ENCODE measurements at regions of chr5 and their contacts with region 1.

Region 1: GRCh38 chr5:141557681-141558136 is 61.1 kb downstream of the DIAPH1 start:
- DNase-seq: peak; percentile 99
- H3K4me3 ChIP-seq: peak overlapping the region; percentile 4 to 9 (median 4)
- H3K27ac ChIP-seq: peak overlapping the region; percentile 97
- H3K4me1 ChIP-seq: peaks cover 31% of the 10 kb centered on the region
- H3K27me3 ChIP-seq: no peaks in the 10 kb centered on the region
- CTCF ChIP-seq: peak; percentile 80 to 82

Region 2: DNA sequence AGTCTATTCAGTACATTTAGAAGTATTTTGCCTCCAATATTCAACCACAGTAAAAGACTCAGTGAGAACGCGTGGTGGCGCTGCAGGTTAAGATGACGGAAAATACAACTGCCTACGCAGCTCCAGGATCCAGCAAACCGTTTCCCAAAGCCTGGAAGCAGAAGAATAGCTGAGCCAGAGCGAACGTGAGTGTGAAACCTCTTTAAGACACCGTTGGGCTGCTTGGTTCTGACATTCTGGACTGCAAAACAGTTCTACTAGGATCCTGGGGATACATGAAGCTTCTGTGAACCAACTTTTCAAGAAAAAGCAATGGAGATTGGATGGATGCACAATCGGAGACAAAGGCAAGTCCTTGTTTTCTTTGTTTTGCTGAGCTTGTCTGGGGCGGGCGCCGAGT is 375.5 kb before region 1 on chr5 and contains the start of gene PCDHB16:
- CTCF ChIA-PET with region 1: no interaction called
- dilution Hi-C with region 1: no loop called
- in situ Hi-C with region 1: no loop called
- intact Hi-C with region 1: loop called (anchors 2 kb)
- DNase-seq: peak; percentile 3
- H3K4me3 ChIP-seq: peak within 1 kb of the TSS in 1 of 3 experiments; percentile 19
- H3K27ac ChIP-seq: no peak within 1 kb of the TSS
- H3K4me1 ChIP-seq: no peaks in the 10 kb centered on the region
- H3K27me3 ChIP-seq: no peaks in the 10 kb centered on the region
- CTCF ChIP-seq: peak; percentile 27 to 48
- total RNA-seq, gene PCDHB16: 0.21 to 0.33 TPM

Region 3: GRCh38 chr5:141223112-141223783 is 334.5 kb before region 1 on chr5 and contains the start of gene PCDHB14:
- CTCF ChIA-PET with region 1: interaction called, 5 read pairs
- dilution Hi-C with region 1: no loop called
- in situ Hi-C with region 1: loop called (anchors 10 to 25 kb)
- intact Hi-C with region 1: loop called (anchors 1 kb)
- DNase-seq: peak; percentile 65
- H3K4me3 ChIP-seq: peak within 1 kb of the TSS in 2 of 3 experiments; percentile 17 to 32
- H3K27ac ChIP-seq: no peak within 1 kb of the TSS
- H3K4me1 ChIP-seq: no peaks in the 10 kb centered on the region
- H3K27me3 ChIP-seq: no peaks in the 10 kb centered on the region
- CTCF ChIP-seq: peak in 1 of 2 donors; percentile 38
- total RNA-seq, gene PCDHB14: 1.4 to 1.7 TPM

Region 4: GRCh38 chr5:141369994-141370848 is 187.5 kb before region 1 on chr5 and contains the start of gene PCDHGB3:
- CTCF ChIA-PET with region 1: interaction called, 13 read pairs
- dilution Hi-C with region 1: no loop called
- in situ Hi-C with region 1: no loop called
- intact Hi-C with region 1: loop called (anchors 5 kb)
- DNase-seq: peak; percentile 12
- H3K4me3 ChIP-seq: peak within 1 kb of the TSS in 2 of 3 experiments; percentile 4 to 26
- H3K27ac ChIP-seq: no peak within 1 kb of the TSS
- H3K4me1 ChIP-seq: no peaks in the 10 kb centered on the region
- H3K27me3 ChIP-seq: peaks cover 1% of the 10 kb centered on the region
- CTCF ChIP-seq: peak; percentile 28 to 40
- total RNA-seq, gene PCDHGB3: 1.8 to 4.2 TPM

Region 5: DNA sequence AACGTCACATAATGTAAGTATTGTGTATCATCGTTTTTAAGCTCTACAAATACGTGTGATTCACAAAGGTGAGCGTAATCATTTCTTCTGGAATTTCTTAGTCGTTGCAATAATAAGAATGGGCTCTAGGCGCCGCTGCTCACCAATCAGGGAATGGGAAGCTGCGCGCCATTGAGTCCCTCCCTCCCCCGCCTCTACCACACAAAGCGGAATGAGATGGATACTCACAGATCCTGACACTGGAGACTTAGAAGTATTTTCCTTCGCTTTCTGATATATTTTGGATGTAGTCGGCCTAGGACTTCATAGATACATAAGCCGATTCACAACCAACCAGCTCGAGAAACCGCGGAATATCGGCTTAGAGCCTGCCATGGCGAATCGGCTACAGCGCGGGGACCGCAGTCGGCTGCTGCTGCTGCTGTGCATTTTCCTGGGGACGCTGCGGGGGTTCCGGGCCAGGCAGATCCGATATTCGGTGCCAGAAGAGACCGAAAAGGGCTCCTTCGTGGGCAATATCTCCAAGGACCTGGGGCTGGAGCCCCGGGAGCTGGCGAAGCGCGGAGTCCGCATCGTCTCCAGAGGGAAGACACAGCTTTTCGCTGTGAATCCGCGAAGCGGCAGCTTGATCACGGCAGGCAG is 136.7 kb before region 1 on chr5 and contains the start of gene PCDHGA11:
- CTCF ChIA-PET with region 1: no interaction called
- dilution Hi-C with region 1: loop called (anchors 10 kb)
- in situ Hi-C with region 1: no loop called
- intact Hi-C with region 1: loop called (anchors 1 kb)
- DNase-seq: peak; percentile 67
- H3K4me3 ChIP-seq: peak within 1 kb of the TSS in 1 of 3 experiments; percentile 7
- H3K27ac ChIP-seq: no peak within 1 kb of the TSS
- H3K4me1 ChIP-seq: no peaks in the 10 kb centered on the region
- H3K27me3 ChIP-seq: no peaks in the 10 kb centered on the region
- CTCF ChIP-seq: peak in 1 of 2 donors; percentile 24
- total RNA-seq, gene PCDHGA11: 1.2 to 8.5 TPM

Region 6: GRCh38 chr5:141475625-141476131 is 82.0 kb before region 1 on chr5 and contains the start of gene PCDHGC3:
- CTCF ChIA-PET with region 1: interaction called, 3 read pairs
- dilution Hi-C with region 1: no loop called
- in situ Hi-C with region 1: no loop called
- intact Hi-C with region 1: loop called (anchors 1 kb)
- DNase-seq: peak; percentile 95
- H3K4me3 ChIP-seq: peak within 1 kb of the TSS; percentile 50 to 73 (median 72)
- H3K27ac ChIP-seq: peak within 1 kb of the TSS; percentile 79
- H3K4me1 ChIP-seq: peaks cover 25% of the 10 kb centered on the region
- H3K27me3 ChIP-seq: no peaks in the 10 kb centered on the region
- CTCF ChIP-seq: peak; percentile 14 to 46
- total RNA-seq, gene PCDHGC3: 74.7 to 76.3 TPM

Region 7: GRCh38 chr5:141681695-141682641 is 124.3 kb after region 1 on chr5 and contains the start of gene ARAP3:
- CTCF ChIA-PET with region 1: interaction called, 37 read pairs
- dilution Hi-C with region 1: no loop called
- in situ Hi-C with region 1: no loop called
- intact Hi-C with region 1: no loop called
- DNase-seq: peak; percentile 86
- H3K4me3 ChIP-seq: peak within 1 kb of the TSS; percentile 23 to 54 (median 45)
- H3K27ac ChIP-seq: peak within 1 kb of the TSS; percentile 72
- H3K4me1 ChIP-seq: peaks cover 26% of the 10 kb centered on the region
- H3K27me3 ChIP-seq: no peaks in the 10 kb centered on the region
- CTCF ChIP-seq: no peak
- total RNA-seq, gene ARAP3: 6.0 to 10.0 TPM

Region 8: DNA sequence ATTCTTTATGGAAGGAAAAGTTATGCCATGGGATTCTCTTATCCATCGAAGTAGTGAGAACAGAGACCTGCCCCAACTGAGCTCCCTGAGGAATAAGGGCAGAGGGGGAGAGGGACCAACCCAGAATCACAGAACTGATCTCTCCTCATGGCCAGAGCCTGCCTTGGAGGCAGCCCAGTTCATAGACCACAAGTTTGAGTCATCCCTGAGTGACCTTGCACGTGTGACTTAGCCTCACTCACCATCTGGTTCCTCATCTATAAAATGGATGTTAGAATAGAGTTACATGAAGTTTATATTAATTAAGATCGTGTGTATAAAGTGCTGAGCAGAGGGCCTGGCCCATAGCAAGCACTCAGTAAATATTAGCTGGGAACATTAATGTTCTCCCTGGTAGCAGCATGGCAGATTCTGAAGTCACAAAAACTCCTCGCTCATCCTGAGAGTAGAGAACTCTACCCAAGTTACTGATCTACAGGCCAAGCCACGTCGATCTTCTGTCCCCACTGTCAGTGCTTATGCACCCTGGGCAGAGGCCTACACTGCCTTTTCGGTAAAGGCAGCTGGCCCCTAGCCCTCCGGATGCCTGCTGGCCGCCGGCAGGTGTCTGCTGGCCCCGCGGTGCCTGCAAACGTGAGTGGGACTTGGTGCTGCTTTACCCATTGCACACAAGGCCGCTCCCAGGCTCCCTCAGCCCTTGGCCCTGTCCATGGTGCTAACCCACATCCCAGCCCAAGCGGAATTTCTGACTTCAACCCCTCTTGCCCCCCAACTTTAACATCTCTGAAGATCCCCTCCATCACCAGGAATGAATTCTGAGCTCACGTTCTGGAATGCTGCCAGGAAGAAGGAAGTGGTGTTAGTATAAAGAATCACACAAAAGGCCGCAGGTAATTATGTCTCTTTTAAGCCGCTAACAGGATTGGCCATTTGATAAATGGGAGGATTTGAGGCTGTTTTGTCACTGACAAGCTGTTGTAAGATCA is 185.4 kb after region 1 on chr5:
- CTCF ChIA-PET with region 1: no interaction called
- dilution Hi-C with region 1: no loop called
- in situ Hi-C with region 1: no loop called
- intact Hi-C with region 1: no loop called
- DNase-seq: peak; percentile 22
- H3K4me3 ChIP-seq: no peak overlapping the region
- H3K27ac ChIP-seq: no peak overlapping the region
- H3K4me1 ChIP-seq: no peaks in the 10 kb centered on the region
- H3K27me3 ChIP-seq: no peaks in the 10 kb centered on the region
- CTCF ChIP-seq: no peak

Measured in mammary epithelial cell (primary cell).